ENCODE measurements at regions of chr21 and their contacts with region 1.

Region 1: GRCh38 chr21:41121785-41122421 is 46.1 kb upstream of the BACE2 start:
- DNase-seq: peak; percentile 70
- H3K4me3 ChIP-seq: no peak overlapping the region
- H3K27ac ChIP-seq: no peak overlapping the region
- H3K4me1 ChIP-seq: peaks cover 12% of the 10 kb centered on the region
- H3K27me3 ChIP-seq: no peaks in the 10 kb centered on the region
- CTCF ChIP-seq: peak; percentile 98 to 99

Region 2: GRCh38 chr21:41133896-41134522 is 12.1 kb after region 1 on chr21:
- CTCF ChIA-PET with region 1: no interaction called
- dilution Hi-C with region 1: no loop called
- in situ Hi-C with region 1: no loop called
- intact Hi-C with region 1: loop called (anchors 2 kb)
- DNase-seq: peak; percentile 23
- H3K4me3 ChIP-seq: no peak overlapping the region
- H3K27ac ChIP-seq: no peak overlapping the region
- H3K4me1 ChIP-seq: peaks cover 3% of the 10 kb centered on the region
- H3K27me3 ChIP-seq: no peaks in the 10 kb centered on the region
- CTCF ChIP-seq: peak; percentile 53 to 68

Region 3: DNA sequence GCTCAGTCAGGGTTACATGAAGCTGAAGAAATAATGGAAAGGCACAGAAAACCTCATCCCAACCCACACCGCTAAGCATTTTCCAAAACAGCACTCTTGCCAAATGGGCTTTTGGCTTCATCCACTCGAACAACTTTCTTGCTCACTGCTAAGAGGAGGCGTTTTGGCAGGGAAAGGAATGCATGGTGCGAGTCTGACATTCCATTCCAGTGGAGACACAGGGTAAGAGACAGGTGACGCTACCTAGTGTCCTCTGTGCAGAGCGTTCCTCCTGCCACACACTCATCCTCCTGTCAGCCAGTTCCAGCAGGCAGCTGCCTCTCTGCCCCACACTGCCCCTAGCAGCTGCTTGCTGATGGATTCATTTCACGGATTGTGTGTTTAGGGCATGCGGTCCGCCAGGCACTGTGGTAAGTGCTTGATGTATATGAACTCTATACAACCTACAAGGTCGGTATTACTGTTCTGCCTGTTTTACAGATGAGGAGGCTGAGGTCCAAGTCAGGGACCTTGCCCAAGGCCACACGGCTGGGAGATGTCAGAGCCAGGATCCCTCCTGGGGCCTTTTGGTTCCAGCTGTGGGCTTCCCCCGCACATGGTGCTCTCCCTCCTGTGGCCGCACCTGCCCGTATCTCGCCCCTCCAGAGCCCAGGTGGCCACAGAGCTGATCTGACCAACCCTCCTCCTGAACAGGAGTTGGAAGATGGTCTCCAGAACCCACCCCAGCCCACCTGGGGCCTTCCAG is 20.3 kb after region 1 on chr21:
- CTCF ChIA-PET with region 1: interaction called, 3 read pairs
- dilution Hi-C with region 1: no loop called
- in situ Hi-C with region 1: no loop called
- intact Hi-C with region 1: loop called (anchors 1 kb)
- DNase-seq: peak; percentile 92
- H3K4me3 ChIP-seq: no peak overlapping the region
- H3K27ac ChIP-seq: peak overlapping the region; percentile 6
- H3K4me1 ChIP-seq: peaks cover 28% of the 10 kb centered on the region
- H3K27me3 ChIP-seq: no peaks in the 10 kb centered on the region
- CTCF ChIP-seq: peak; percentile 10 to 46

Region 4: DNA sequence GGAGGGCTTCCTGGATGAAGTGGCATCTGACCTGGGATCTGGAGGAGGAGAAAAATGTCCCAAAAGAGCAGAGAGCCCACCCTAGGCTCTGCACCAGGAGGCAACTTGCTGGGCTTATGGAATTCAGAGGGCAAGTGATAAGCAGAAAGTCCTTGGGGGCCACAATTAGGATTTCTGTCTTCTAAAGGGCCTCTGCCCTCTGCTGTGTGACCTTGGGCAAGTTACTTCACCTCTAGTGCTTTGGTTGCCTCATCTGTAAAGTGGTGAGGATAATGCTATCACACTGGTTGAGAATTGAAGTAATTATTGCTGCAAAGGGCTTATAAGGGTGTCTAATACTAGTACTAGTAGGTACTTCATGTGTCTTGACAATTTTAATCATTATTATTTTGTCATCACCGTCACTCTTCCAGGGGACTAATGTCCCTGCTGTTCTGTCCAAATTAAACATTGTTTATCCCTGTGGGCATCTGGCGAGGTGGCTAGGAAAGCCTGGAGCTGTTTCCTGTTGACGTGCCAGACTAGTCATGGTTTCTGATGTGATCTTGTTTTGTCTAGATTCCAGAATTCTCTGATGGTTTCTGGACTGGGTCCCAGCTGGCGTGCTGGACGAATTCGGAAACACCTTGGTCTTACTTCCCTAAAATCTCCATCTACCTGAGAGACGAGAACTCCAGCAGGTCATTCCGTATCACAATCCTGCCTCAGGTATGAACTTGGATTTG is 128.5 kb after region 1 on chr21:
- CTCF ChIA-PET with region 1: no interaction called
- dilution Hi-C with region 1: no loop called
- in situ Hi-C with region 1: no loop called
- intact Hi-C with region 1: loop called (anchors 10 kb)
- DNase-seq: peak; percentile 66
- H3K4me3 ChIP-seq: no peak overlapping the region
- H3K27ac ChIP-seq: peak overlapping the region; percentile 53
- H3K4me1 ChIP-seq: peaks cover 26% of the 10 kb centered on the region
- H3K27me3 ChIP-seq: no peaks in the 10 kb centered on the region
- CTCF ChIP-seq: no peak

Region 5: GRCh38 chr21:41283211-41283818 is 161.4 kb after region 1 on chr21:
- CTCF ChIA-PET with region 1: interaction called, 5 read pairs
- dilution Hi-C with region 1: no loop called
- in situ Hi-C with region 1: no loop called
- intact Hi-C with region 1: loop called (anchors 1 kb)
- DNase-seq: peak; percentile 69
- H3K4me3 ChIP-seq: no peak overlapping the region
- H3K27ac ChIP-seq: no peak overlapping the region
- H3K4me1 ChIP-seq: no peaks in the 10 kb centered on the region
- H3K27me3 ChIP-seq: no peaks in the 10 kb centered on the region
- CTCF ChIP-seq: peak; percentile 82 to 83

Region 6: DNA sequence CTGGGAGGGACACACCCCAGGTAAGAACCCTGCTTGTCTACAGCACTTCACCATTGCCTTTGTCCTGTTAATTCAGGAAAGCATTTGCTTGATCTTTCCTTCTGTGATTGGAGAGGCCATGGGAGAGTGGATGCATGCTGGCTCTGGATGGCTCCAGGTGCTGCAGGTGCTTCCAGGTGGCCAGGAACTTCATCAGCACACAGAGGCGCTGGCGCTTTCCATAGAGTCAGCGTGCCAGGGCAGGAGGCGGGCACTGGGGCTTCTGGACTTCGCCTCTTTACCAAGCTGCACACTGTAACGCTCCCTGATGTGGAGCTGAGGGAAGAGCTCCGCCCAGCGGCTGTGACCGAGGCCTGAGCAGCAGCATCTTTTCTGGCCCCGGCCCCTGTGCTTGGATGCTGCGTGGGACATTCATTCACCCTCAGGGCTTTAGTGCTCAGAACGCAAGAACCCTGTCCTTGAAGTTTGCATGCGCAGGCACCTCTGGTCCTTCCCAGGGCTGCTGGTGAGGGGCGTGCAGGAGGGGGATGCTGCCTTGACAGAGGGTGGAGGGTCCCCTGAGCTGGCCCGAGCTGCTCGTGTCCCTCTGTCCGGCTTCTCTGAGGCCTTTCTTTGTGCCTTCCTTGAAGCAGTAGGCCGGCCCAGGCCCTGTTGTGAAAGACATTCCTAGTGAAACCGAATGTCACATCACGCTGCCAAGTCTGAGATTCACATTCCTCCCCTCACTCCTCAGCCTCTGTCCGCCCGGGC is 238.3 kb after region 1 on chr21:
- CTCF ChIA-PET with region 1: no interaction called
- dilution Hi-C with region 1: no loop called
- in situ Hi-C with region 1: no loop called
- intact Hi-C with region 1: loop called (anchors 1 kb)
- DNase-seq: peak; percentile 21
- H3K4me3 ChIP-seq: no peak overlapping the region
- H3K27ac ChIP-seq: no peak overlapping the region
- H3K4me1 ChIP-seq: no peaks in the 10 kb centered on the region
- H3K27me3 ChIP-seq: peaks cover 5% of the 10 kb centered on the region
- CTCF ChIP-seq: peak in 1 of 2 donors; percentile 35

Region 7: GRCh38 chr21:41460578-41461527 is 338.9 kb after region 1 on chr21:
- CTCF ChIA-PET with region 1: no interaction called
- dilution Hi-C with region 1: no loop called
- in situ Hi-C with region 1: no loop called
- intact Hi-C with region 1: loop called (anchors 1 kb)
- DNase-seq: peak; percentile 36
- H3K4me3 ChIP-seq: no peak overlapping the region
- H3K27ac ChIP-seq: no peak overlapping the region
- H3K4me1 ChIP-seq: no peaks in the 10 kb centered on the region
- H3K27me3 ChIP-seq: no peaks in the 10 kb centered on the region
- CTCF ChIP-seq: peak; percentile 79 to 94

Region 8: GRCh38 chr21:41589131-41589530 is 467.2 kb after region 1 on chr21:
- CTCF ChIA-PET with region 1: no interaction called
- dilution Hi-C with region 1: no loop called
- in situ Hi-C with region 1: no loop called
- intact Hi-C with region 1: no loop called
- DNase-seq: no peak
- H3K4me3 ChIP-seq: no peak overlapping the region
- H3K27ac ChIP-seq: no peak overlapping the region
- H3K4me1 ChIP-seq: peaks cover 5% of the 10 kb centered on the region
- H3K27me3 ChIP-seq: no peaks in the 10 kb centered on the region
- CTCF ChIP-seq: no peak

Measured in mammary epithelial cell (primary cell).